Ascending aorta (tissue), 2 donors: ENCODE measurements at regions of chr17 and their contacts with region 1.

Region 1: DNA sequence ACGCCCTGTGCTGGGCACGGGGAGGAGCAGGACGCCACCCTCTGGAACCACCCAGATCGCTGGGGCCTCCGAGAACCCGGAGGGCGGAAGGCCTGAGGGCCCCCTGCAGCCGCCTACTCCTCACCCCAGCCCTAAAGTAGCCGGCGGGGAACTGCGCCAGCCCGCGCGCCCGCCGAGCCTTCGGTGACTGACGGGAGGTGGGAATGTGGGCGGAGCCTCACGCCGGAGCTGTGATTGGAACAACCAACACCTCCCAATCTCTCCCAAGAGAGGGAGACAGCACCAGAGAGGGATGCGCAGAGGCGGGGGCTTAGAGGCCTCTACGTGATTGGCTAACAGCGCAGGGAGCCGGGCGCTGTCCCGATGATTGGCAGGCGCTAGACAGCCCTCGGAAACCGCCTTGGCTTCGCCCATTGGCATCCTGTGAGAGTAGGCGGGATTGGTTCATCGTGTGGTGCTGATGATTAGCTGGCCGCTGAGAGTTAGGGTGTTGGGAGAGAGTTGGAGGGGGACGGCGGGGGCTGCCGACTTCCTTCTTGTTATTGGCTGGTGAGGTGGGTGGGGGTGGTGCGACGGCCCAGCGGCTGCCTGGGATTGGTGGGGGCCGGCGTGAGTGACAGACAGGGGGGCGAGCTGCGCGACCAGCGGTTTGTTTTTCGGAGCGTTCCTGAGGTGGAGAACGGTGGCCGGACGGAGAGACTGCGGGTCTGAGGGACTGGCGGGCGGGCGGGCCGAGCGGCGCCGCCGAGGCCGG is at the start of gene MAP3K3:
- DNase-seq: peak; percentile 100
- H3K4me3 ChIP-seq: peak within 1 kb of the TSS; percentile 59 to 73
- H3K27ac ChIP-seq: peak within 1 kb of the TSS; percentile 73 to 82
- H3K4me1 ChIP-seq: peaks cover 4 to 26% of the 10 kb centered on the region in 2 donors
- H3K27me3 ChIP-seq: no peaks in the 10 kb centered on the region
- CTCF ChIP-seq: peak in 1 of 3 experiments; percentile 16
- total RNA-seq, gene MAP3K3: 75.6 TPM

Region 2: DNA sequence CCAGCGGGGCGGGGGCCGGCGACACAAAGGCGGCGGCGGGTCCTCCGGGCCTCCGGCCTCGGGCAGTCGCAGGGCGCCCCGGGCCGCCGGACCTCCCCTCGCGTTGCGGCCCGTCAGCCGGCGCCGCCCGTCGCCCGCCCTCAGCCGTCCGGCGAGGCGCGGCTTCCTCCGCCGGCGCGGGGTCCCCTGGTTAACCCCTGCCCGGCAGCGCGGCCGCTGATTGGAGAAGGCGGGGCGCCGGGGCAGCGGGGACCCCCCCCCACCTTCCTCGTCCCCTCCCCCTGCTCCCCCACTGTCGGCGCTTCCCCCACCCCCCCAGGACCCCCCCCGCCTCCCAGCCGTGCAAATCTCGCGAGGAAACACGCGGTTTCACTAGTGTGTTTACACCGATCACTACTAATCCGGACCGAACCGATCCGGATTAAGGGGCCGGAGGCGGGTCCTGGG is 1143.5 kb before region 1 on chr17 and contains the start of gene TLK2:
- intact Hi-C with region 1: loop called (anchors 5 kb)
- DNase-seq: peak in 1 of 2 donors; percentile 85
- H3K4me3 ChIP-seq: peak within 1 kb of the TSS; percentile 84 to 88
- H3K27ac ChIP-seq: peak within 1 kb of the TSS; percentile 92 to 94
- H3K4me1 ChIP-seq: peaks cover 5 to 19% of the 10 kb centered on the region in 2 donors
- H3K27me3 ChIP-seq: no peaks in the 10 kb centered on the region
- CTCF ChIP-seq: no peak
- total RNA-seq, gene TLK2: 11.3 TPM

Region 3: GRCh38 chr17:63549946-63550807 is 71.8 kb before region 1 on chr17 and contains the start of gene DCAF7:
- intact Hi-C with region 1: loop called (anchors 1 kb)
- DNase-seq: peak; percentile 97 to 100
- H3K4me3 ChIP-seq: peak within 1 kb of the TSS; percentile 55 to 83
- H3K27ac ChIP-seq: peak within 1 kb of the TSS; percentile 77 to 90
- H3K4me1 ChIP-seq: peaks cover 0 to 15% of the 10 kb centered on the region in 2 donors
- H3K27me3 ChIP-seq: no peaks in the 10 kb centered on the region
- CTCF ChIP-seq: no peak
- total RNA-seq, gene DCAF7: 18.6 TPM

Region 4: DNA sequence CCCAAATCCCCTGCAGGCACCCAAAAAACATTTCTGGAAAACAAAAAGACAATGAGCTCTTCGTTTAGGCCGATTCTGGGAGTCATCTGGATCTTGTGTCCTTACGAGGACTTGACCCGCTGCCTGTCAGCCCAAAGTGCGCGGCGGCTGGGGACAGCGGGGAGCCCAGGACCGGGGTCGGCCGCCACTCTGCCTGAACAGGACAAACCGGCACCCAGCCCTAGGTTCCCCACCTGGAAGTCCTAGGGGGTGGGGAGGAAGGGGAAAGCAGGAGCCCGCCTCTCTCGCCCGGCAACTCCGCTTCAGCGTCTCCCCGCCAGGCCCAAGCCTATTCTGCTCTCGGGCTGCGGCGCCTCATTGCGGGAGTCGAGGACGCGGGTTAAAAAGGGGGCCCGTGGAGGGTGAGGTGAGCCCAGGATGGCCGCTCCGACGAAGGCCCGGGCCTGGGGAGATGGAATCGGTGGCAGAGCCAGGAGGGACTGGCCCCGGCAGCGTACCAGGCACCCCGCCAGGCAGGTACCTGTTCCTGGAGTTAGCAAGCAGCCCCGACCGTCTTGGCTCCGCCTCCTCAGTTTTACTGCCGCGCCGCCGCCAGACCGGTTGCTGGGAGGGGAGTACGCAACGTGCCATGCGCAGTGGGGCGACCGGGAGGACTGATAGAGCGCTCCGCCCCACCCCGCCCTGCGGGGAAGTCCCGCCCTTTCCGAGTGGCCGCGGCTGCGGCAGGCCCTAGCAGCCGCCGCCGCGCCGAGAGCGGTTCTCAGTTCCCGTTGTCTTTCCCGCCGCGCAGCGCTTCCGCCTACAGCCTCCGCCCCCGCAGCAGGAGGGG is 119.5 kb after region 1 on chr17 and contains the start of gene STRADA:
- intact Hi-C with region 1: loop called (anchors 2 kb)
- DNase-seq: peak; percentile 94 to 99
- H3K4me3 ChIP-seq: peak within 1 kb of the TSS; percentile 84 to 90
- H3K27ac ChIP-seq: peak within 1 kb of the TSS; percentile 91 to 94
- H3K4me1 ChIP-seq: peaks cover 0 to 10% of the 10 kb centered on the region in 2 donors
- H3K27me3 ChIP-seq: no peaks in the 10 kb centered on the region
- CTCF ChIP-seq: no peak
- total RNA-seq, gene STRADA: 3.2 TPM

Region 5: DNA sequence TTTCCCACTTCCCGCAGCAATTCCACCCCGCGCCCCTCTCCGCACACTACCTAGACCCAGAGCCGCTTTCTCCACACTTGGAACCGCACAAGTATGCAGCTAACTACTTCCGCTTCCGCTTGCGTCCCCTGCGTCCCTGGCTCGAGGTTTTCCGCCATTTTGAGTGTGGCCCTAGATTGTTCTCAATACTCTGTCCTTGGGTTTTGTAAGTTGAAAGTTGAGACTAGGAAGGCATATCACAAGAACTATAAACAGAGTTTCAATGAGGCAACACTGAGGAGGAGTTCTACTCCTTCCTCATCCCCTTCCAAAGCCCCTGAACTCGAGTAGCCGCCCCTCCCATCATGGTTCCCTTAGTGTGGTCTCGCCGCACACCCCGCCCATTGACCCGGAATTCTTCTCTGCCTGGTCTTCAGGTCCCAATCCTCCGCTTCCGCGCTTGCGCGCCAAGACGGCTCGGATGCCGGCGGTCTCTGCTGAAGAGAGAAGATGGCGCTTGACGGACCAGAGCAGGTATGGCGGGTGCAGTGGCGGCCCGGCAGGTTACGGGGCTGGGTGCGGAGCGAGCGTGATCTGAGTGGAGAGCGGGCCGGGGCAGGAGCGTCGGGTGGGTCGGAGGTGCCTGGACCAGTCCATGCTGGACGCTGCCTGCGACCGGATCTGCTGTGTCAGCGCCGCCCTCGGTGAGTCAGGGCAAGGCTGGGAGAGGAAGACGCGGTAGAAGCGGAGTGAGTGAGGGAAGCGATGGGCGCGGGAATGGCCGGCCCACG is 205.2 kb after region 1 on chr17 and contains the starts of genes FTSJ3 and PSMC5:
- intact Hi-C with region 1: loop called (anchors 2 kb)
- DNase-seq: peak; percentile 78 to 97
- H3K4me3 ChIP-seq: peak within 1 kb of the TSS; percentile 66 to 90
- H3K27ac ChIP-seq: peak within 1 kb of the TSS; percentile 89 to 90
- H3K4me1 ChIP-seq: peaks cover 10 to 22% of the 10 kb centered on the region in 2 donors
- H3K27me3 ChIP-seq: no peaks in the 10 kb centered on the region
- CTCF ChIP-seq: peak; percentile 25 to 52 (median 40)
- total RNA-seq, gene FTSJ3: 18.2 TPM
- total RNA-seq, gene PSMC5: 83.7 TPM